CD4-positive, alpha-beta T cell (primary cell): ENCODE measurements at regions of chr16 and their contacts with region 1.

Region 1: GRCh38 chr16:18999045-18999393 is 15.3 kb downstream of the TMC7 start:
- DNase-seq: no peak
- ATAC-seq: no peak
- H3K4me3 ChIP-seq: no peak overlapping the region
- H3K4me3 Mint-ChIP-seq: no peak overlapping the region
- H3K27ac ChIP-seq: no peak overlapping the region
- H3K27ac Mint-ChIP-seq: no peak overlapping the region
- H3K4me1 ChIP-seq: no peaks in the 10 kb centered on the region
- H3K4me1 Mint-ChIP-seq: no peaks in the 10 kb centered on the region
- H3K27me3 ChIP-seq: no peaks in the 10 kb centered on the region
- H3K27me3 Mint-ChIP-seq: peaks cover 6% of the 10 kb centered on the region
- CTCF ChIP-seq: no peak

Region 2: GRCh38 chr16:19044769-19045168 is 45.8 kb after region 1 on chr16:
- CTCF ChIA-PET with region 1: no interaction called
- POLR2A ChIA-PET with region 1: no interaction called
- intact Hi-C with region 1: loop called in 1 of 2 experiments (anchors 5 kb)
- DNase-seq: no peak
- ATAC-seq: no peak
- H3K4me3 ChIP-seq: no peak overlapping the region
- H3K4me3 Mint-ChIP-seq: no peak overlapping the region
- H3K27ac ChIP-seq: no peak overlapping the region
- H3K27ac Mint-ChIP-seq: no peak overlapping the region
- H3K4me1 ChIP-seq: no peaks in the 10 kb centered on the region
- H3K4me1 Mint-ChIP-seq: no peaks in the 10 kb centered on the region
- H3K27me3 ChIP-seq: no peaks in the 10 kb centered on the region
- H3K27me3 Mint-ChIP-seq: peaks cover 4% of the 10 kb centered on the region
- CTCF ChIP-seq: no peak